Activated naive CD4-positive, alpha-beta T cell treated with anti-CD3 and anti-CD28 coated beads for 36 hours (primary cell): ENCODE measurements at regions of chr16 and their contacts with region 1.

Region 1: DNA sequence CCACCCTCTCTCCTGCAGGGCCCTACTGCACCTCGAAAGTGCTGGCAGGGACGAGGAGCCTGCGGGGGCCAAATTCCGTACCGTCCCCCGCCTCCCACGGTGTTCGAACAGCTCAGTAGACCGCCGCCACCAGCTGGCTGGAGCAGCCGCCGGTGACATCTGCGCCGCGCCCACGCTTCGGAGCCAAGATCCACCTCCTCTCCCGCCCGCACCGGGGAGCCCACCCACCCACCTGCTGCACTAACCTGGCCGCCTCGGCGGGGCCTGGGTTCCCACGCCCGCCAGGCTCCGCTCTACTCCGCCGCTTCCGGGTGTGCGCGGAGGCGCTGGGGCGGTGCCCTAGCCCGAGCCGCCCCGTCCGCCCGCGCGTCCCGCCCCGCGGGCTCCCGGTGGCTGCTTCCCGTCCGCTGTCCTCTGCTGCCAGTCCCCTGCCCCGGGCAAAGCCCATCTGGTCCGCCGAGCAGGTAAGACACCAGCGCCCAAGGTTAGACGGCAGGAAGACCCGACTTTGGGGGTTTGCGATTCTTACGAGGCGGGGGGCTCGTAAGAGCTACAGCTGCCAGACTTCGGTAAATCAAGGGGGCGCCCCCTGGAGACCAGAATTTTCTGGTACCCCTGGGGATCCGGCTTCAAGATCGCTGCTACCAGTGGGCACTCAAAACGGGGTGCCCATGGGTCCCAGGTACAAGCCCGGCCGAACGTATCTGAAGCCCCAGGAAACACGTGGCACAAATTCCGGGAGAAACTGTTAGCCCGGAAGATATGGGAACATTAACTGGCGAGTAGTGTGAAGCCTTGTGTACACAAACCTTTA is at the starts of genes FBXL8 and TRADD:
- DNase-seq: peak; percentile 78
- H3K4me3 Mint-ChIP-seq: peak within 1 kb of the TSS; percentile 88
- H3K27ac Mint-ChIP-seq: peak within 1 kb of the TSS; percentile 91
- H3K4me1 Mint-ChIP-seq: peaks cover 47% of the 10 kb centered on the region
- H3K27me3 Mint-ChIP-seq: peaks cover 24% of the 10 kb centered on the region
- total RNA-seq, gene FBXL8: 13.8 to 15.3 TPM
- total RNA-seq, gene TRADD: 17.7 to 21.1 TPM

Region 2: DNA sequence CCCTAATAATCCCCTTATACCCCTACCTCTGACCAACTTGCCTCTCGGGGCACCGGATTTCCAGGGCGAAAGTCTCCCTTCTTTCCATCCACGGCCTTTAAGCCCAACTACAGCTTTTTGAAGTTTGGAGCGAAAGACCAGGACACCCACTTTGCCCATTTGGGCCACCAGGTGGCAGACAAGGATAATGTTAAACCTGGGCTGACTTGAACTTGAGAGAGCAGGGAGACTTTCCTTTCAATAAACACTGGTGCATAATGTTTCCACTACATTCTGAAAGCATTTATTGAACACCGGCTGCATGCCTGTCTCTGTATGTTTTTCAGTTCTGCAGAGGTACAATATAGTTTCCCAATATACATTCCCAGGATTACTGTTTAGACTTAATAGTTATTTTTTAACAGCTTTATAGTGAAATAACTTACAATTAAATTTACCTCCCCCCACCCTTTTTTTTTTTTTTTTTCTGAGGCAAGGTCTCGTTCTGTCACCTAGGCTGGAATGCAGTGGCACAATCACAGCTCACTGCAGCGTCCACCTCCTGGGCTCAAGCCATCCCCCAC is 205.6 kb before region 1 on chr16:
- CTCF ChIA-PET with region 1: interaction called, 8 read pairs
- intact Hi-C with region 1: loop called (anchors 1 kb)
- DNase-seq: peak; percentile 90
- H3K4me3 Mint-ChIP-seq: no peak overlapping the region
- H3K27ac Mint-ChIP-seq: no peak overlapping the region
- H3K4me1 Mint-ChIP-seq: peaks cover 14% of the 10 kb centered on the region
- H3K27me3 Mint-ChIP-seq: peaks cover 27% of the 10 kb centered on the region

Region 3: DNA sequence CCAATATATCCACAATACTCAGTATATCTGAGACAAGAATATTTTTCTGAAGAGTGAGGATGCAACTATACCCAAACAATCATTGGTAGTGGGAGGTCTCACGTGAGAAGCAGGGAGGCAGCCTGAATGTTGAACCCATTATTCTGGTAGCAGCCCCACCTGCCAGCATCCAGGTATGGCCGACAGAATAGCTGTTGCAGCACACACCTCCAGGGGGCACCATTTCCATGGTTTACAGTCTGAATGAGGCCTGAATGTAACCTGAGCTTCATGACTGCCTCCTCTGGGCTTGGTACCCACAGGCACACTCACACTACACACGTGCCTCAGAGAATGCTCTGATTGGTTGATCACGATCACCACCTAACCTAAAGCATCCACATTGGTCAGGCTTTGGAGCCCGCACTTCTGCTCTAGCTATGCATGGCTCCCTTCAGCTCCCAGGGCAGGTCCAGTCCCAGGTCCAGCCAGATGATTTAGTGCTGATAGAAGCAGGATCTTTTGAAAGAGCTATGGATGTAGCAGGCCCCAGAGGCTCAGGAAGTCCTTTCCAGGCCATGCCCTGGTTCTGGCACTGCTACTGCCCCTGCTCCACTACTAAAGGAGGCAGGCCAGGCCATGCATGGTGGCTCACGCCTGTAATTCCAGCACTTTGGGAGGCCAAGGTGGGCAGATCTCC is 141.9 kb before region 1 on chr16:
- CTCF ChIA-PET with region 1: interaction called, 163 read pairs
- intact Hi-C with region 1: loop called (anchors 1 kb)
- DNase-seq: peak; percentile 96
- H3K4me3 Mint-ChIP-seq: no peak overlapping the region
- H3K27ac Mint-ChIP-seq: no peak overlapping the region
- H3K4me1 Mint-ChIP-seq: peaks cover 5% of the 10 kb centered on the region
- H3K27me3 Mint-ChIP-seq: peaks cover 4% of the 10 kb centered on the region

Region 4: DNA sequence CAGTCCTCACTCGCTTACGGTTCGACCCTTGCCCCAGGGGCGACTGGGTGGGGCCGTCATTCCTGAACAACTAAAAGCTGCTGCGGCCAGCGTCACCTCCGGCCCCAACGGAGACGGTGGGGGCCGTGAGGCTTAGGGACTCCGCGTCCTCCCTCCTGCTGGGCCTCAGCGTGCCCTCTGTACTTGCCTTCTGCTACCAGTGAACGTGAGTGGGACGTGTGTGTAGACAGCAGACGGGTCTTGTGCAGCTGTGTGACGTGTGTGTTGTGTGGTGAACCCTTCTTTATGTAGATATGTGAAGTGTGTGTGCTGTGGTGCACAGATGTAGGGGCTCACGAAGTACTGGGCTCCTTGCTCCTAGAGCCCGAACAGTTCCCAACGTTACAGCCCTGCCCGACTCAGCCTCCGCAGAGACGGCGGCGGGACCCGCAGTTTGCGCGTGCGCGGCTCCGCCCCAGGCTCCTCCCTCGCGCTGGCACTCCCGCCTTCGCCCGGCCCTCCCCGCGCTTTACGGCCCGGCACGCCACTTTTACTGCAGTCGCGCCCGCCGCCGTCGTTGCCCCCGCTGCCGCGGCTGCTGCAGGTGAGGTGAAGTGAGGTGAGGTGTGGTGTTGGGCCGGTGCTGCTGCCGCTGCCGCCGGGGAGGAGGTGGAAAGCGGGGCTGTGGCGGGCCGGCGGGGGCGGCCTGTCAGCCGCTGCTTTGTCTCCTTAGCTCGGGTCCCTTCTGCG is 50.2 kb before region 1 on chr16 and contains the start of gene PHAF1:
- CTCF ChIA-PET with region 1: interaction called, 3 read pairs
- intact Hi-C with region 1: loop called (anchors 2 kb)
- DNase-seq: peak; percentile 95
- H3K4me3 Mint-ChIP-seq: peak within 1 kb of the TSS; percentile 94
- H3K27ac Mint-ChIP-seq: no peak within 1 kb of the TSS
- H3K4me1 Mint-ChIP-seq: peaks cover 27% of the 10 kb centered on the region
- H3K27me3 Mint-ChIP-seq: no peaks in the 10 kb centered on the region
- total RNA-seq, gene PHAF1: 7.8 to 8.4 TPM

Region 5: GRCh38 chr16:67183627-67184328 is 24.0 kb after region 1 on chr16 and contains the start of gene MATCAP1:
- CTCF ChIA-PET with region 1: interaction called, 12 read pairs
- intact Hi-C with region 1: loop called (anchors 1 kb)
- DNase-seq: peak; percentile 97
- H3K4me3 Mint-ChIP-seq: peak within 1 kb of the TSS; percentile 50
- H3K27ac Mint-ChIP-seq: no peak within 1 kb of the TSS
- H3K4me1 Mint-ChIP-seq: peaks cover 12% of the 10 kb centered on the region
- H3K27me3 Mint-ChIP-seq: peaks cover 17% of the 10 kb centered on the region
- total RNA-seq, gene MATCAP1: 21.9 to 24.0 TPM

Region 6: GRCh38 chr16:67207857-67208519 is 48.2 kb after region 1 on chr16:
- CTCF ChIA-PET with region 1: no interaction called
- intact Hi-C with region 1: no loop called
- DNase-seq: no peak
- H3K4me3 Mint-ChIP-seq: no peak overlapping the region
- H3K27ac Mint-ChIP-seq: no peak overlapping the region
- H3K4me1 Mint-ChIP-seq: no peaks in the 10 kb centered on the region
- H3K27me3 Mint-ChIP-seq: no peaks in the 10 kb centered on the region

Region 7: GRCh38 chr16:67246934-67247697 is 87.3 kb after region 1 on chr16 and contains the start of gene FHOD1:
- CTCF ChIA-PET with region 1: no interaction called
- intact Hi-C with region 1: loop called (anchors 1 kb)
- DNase-seq: peak; percentile 99
- H3K4me3 Mint-ChIP-seq: peak within 1 kb of the TSS; percentile 89
- H3K27ac Mint-ChIP-seq: peak within 1 kb of the TSS; percentile 76
- H3K4me1 Mint-ChIP-seq: peaks cover 51% of the 10 kb centered on the region
- H3K27me3 Mint-ChIP-seq: peaks cover 8% of the 10 kb centered on the region
- total RNA-seq, gene FHOD1: 70.7 to 73.7 TPM